OCI-LY7 (cell line): ENCODE measurements at regions of chr1 and their contacts with region 1.

Region 1: GRCh38 chr1:28750330-28750729 is 13.6 kb downstream of the YTHDF2 start:
- DNase-seq: no peak
- H3K4me3 ChIP-seq: no peak overlapping the region
- H3K27ac ChIP-seq: no peak overlapping the region
- H3K4me1 ChIP-seq: peaks cover 31% of the 10 kb centered on the region
- CTCF ChIP-seq: no peak

Region 2: GRCh38 chr1:27725374-27726173 is 1024.8 kb before region 1 on chr1 and contains the start of gene FAM76A:
- CTCF ChIA-PET with region 1: no interaction called
- POLR2A ChIA-PET with region 1: interaction called, 13 read pairs
- intact Hi-C with region 1: no loop called
- DNase-seq: peak; percentile 100
- H3K4me3 ChIP-seq: peak within 1 kb of the TSS; percentile 85
- H3K27ac ChIP-seq: peak within 1 kb of the TSS; percentile 45
- H3K4me1 ChIP-seq: peaks cover 19% of the 10 kb centered on the region
- CTCF ChIP-seq: peak; percentile 74
- total RNA-seq, gene FAM76A: 18.6 and 24.6 TPM in 2 replicates